PC-9 (cell line): ENCODE measurements at regions of chr6 and their contacts with region 1.

Region 1: GRCh38 chr6:158220786-158221442 is 52.8 kb downstream of the GTF2H5 start:
- DNase-seq: peak; percentile 66 to 75
- H3K4me3 ChIP-seq: no peak overlapping the region
- H3K27ac ChIP-seq: no peak overlapping the region; the same call in 1 of the 2 replicates
- H3K4me1 ChIP-seq: peaks cover 20% of the 10 kb centered on the region
- H3K27me3 ChIP-seq: no peaks in the 10 kb centered on the region
- CTCF ChIP-seq: peak; percentile 89

Region 2: DNA sequence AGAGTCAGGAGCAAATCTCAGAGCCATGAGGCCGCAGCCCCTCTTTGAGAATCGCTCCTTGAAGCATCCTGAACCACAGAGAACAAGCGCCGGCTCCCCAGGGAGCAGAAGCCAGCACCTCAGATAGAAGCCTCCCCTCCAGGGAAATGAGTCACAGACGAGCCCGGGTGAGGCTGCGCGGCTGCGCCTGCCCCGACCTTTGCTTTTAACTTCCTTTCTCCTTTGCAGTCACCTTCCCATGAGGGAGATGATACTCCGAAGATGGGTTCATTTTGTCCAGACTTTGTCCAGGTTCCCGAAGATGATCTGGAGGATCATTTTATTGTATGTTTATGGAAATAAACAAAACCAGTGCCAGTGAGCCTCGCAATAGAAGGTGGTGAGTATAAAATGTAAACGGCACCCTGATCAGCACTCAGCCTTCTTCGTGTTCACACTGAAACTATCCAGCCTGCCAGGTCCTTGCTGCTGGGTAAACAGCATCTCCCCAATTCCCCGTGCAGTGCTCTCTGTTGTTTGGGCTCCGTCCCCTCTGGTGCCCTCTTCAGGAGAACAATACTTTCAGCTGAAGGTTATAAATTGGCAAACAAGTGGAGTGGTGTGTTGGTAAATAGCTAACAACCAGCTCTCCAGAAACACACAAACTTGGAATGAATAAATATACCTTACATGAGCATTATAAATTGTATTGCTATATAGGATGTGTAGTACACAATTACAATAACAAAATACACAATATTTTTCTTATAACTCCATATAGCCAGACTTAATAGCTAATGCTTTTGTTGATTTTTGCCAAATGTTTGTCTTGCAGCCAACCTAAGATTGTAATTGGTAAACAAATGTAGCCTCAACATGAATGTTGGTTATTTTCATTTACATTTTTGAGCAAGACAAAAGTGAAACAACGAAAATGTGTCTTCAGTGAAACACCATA is 297.5 kb after region 1 on chr6:
- CTCF ChIA-PET with region 1: interaction called, 5 read pairs
- POLR2A ChIA-PET with region 1: no interaction called
- intact Hi-C with region 1: loop called (anchors 1 kb)
- DNase-seq: peak; percentile 50 to 65
- H3K4me3 ChIP-seq: peak overlapping the region; percentile 50; the same call in 1 of the 2 replicates
- H3K27ac ChIP-seq: peak overlapping the region; percentile 63
- H3K4me1 ChIP-seq: peaks cover 19% of the 10 kb centered on the region
- H3K27me3 ChIP-seq: no peaks in the 10 kb centered on the region
- CTCF ChIP-seq: peak; percentile 68

Region 3: GRCh38 chr6:158605266-158605878 is 384.5 kb after region 1 on chr6:
- CTCF ChIA-PET with region 1: no interaction called
- POLR2A ChIA-PET with region 1: no interaction called
- intact Hi-C with region 1: loop called (anchors 2 kb)
- DNase-seq: peak in 1 of 2 experiments; percentile 22
- H3K4me3 ChIP-seq: no peak overlapping the region
- H3K27ac ChIP-seq: no peak overlapping the region
- H3K4me1 ChIP-seq: no peaks in the 10 kb centered on the region
- H3K27me3 ChIP-seq: no peaks in the 10 kb centered on the region
- CTCF ChIP-seq: peak; percentile 67

Region 4: DNA sequence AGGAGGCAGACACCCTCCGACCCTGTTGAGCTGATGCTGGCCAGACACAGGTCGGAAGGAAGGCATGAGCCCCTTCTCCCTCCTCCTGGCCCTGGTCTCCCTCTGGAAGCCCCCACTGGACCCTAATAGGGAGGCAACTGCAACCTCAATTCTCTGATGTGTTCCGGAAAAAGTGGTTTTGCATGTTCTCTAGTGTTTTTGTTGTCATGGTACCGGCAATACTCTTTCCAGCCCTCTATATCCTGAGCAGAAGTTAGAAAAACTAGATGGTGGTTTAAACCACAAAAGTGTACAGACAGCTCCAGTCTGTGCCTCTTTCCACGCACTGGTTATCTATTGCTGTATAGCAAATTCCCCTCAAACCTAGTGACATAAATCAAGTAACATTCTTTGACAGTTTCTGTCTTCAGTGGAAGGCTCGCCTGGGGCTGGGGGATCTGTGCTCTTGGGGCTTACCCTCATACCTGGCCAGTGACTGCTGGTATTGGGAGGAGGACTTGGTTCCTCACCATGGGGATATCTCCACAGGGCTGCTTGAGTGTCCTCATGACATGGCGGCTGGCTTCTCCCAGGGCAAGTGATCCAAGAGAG is 466.0 kb after region 1 on chr6:
- CTCF ChIA-PET with region 1: no interaction called
- POLR2A ChIA-PET with region 1: interaction called, 5 read pairs
- intact Hi-C with region 1: loop called (anchors 2 kb)
- DNase-seq: no peak
- H3K4me3 ChIP-seq: no peak overlapping the region
- H3K27ac ChIP-seq: peak overlapping the region; percentile 20
- H3K4me1 ChIP-seq: peaks cover 57% of the 10 kb centered on the region
- H3K27me3 ChIP-seq: no peaks in the 10 kb centered on the region
- CTCF ChIP-seq: no peak

Region 5: DNA sequence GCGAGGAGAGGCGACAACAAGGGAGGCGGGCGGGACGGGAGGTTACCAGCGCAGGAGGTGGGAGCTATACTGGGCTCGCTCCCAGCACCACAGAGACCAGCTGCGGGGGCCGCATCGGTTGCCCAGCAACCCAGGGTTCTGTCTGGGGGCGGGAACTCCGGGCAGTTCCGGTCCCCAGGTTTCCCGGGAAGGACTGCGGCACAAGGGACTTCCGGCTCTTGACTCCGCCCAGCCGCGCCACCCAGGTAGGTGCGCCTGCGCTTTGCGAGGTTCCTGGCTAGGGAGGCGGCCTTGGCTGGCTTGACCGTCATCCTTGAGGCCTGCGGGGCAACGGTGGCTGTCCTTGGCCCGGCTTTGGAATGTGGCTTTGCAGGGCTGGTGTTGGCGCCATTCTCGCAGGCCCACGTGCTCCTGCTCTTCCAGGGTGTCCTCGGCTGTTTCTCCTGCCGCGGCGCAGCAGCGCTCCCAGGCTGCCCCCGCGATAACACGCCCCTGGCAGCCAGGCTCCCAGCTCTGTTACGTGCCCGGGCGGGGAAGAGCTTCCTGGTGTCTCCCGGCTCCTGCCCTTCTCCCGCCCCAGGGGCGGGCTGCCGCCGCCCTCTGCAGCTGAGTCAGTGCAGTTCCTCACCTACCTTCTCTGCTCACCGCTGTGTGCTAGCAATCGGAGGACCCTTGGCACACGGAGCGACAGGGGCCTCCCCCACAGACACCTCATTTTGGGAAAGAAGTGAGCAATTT is 778.9 kb after region 1 on chr6 and contains the start of gene RSPH3:
- CTCF ChIA-PET with region 1: no interaction called
- POLR2A ChIA-PET with region 1: no interaction called
- intact Hi-C with region 1: loop called (anchors 5 kb)
- DNase-seq: peak; percentile 91 to 93
- H3K4me3 ChIP-seq: peak within 1 kb of the TSS; percentile 94
- H3K27ac ChIP-seq: peak within 1 kb of the TSS; percentile 91
- H3K4me1 ChIP-seq: peaks cover 62% of the 10 kb centered on the region
- H3K27me3 ChIP-seq: no peaks in the 10 kb centered on the region
- CTCF ChIP-seq: peak; percentile 17; the same call in 1 of the 2 replicates
- total RNA-seq, gene RSPH3: 10.9 and 16.6 TPM in 2 replicates

Region 6: GRCh38 chr6:159134701-159135364 is 913.9 kb after region 1 on chr6:
- CTCF ChIA-PET with region 1: interaction called, 3 read pairs
- POLR2A ChIA-PET with region 1: no interaction called
- intact Hi-C with region 1: loop called (anchors 2 kb)
- DNase-seq: peak; percentile 49 to 54
- H3K4me3 ChIP-seq: no peak overlapping the region
- H3K27ac ChIP-seq: no peak overlapping the region
- H3K4me1 ChIP-seq: no peaks in the 10 kb centered on the region
- H3K27me3 ChIP-seq: peaks cover 9% of the 10 kb centered on the region
- CTCF ChIP-seq: peak; percentile 94